BJ (cell line): ENCODE measurements at regions of chr2 and their contacts with region 1.

Region 1: GRCh38 chr2:237045432-237045831 is 40.3 kb upstream of the COPS8 start:
- DNase-seq: peak; percentile 69
- H3K4me3 ChIP-seq: no peak overlapping the region
- H3K27me3 ChIP-seq: no peaks in the 10 kb centered on the region
- CTCF ChIP-seq: no peak

Region 2: DNA sequence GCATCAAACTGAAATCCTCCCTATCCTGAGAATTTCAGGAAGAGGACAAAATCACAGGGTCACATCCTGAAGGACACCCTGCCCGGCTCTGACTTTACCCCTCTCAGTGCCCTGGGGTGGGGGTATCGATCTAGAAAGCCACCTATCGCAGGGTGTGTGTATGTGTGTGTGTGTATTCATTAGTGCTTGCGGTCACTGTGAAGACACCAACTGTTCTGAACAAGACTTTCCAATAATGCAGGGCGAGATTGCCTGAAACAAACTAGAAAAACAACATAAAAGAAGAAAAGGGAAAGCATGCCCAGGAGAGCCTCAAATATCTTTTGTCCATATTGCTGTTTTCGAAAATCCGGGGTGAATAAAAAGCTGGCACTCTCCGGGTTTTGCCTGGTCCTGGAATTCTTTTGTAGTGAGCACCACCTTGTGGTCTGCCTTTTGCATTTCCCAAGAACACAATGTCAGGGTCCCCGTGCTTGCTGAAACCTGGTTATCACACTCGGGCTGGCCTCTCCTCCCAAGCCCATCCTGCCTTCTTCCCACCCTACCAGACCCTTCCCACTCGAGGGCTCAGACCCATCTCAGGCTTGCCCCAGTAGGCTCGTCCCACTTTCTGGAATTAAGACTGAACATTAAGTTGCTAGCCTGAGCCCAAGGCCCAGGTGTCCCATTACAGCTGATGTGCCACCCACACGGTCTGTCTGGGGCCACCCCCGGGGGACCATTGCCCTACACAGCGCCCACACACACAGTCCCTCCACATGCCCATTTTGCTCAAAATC is 15.3 kb after region 1 on chr2:
- CTCF ChIA-PET with region 1: interaction called, 10 read pairs
- POLR2A ChIA-PET with region 1: no interaction called
- DNase-seq: peak; percentile 5
- H3K4me3 ChIP-seq: no peak overlapping the region
- H3K27me3 ChIP-seq: no peaks in the 10 kb centered on the region; the same call in 1 of the 2 replicates
- CTCF ChIP-seq: peak; percentile 72